CD8-positive, alpha-beta T cell (primary cell): ENCODE measurements at regions of chr1 and their contacts with region 1.

Region 1: DNA sequence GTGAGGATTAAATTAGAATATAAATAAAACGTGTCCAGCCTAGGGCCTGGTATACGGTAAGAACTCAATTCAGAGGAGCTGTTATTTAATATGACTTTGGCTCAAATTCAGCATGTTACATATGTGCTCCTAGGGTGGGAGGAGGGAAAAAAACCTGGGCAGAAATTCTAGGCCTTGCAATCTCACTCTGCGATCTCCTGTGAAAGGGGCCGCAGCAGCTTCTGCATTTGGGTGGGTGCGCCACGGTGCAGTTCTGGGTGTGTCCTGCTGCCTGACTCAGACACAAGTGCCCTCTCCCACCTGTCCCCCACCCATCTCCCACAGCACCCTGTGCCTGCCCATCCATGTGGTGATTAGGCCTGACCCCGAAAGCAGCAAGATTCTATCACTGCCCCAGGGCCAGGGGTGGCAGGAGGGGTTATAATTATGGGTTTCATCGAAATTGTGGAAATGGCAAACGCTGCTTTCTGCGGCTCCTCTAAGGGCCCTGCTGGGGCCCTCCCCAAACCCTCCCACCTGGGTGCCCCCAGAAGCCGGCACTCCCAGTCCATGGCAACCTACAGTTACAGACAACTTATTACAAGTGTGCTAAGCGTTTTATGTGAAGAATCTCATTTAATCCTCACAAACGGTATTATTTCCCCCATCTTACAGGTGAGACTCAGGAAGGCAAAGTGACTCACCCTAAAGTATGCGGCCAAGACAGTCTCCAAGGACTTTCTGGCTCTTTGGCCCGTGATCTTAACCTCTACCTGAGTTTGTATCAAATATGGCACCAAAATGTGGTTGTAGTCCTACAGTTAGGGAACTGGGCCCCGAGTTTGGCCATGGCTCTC is 25.5 kb upstream of the GRHL3 start:
- DNase-seq: peak in 1 of 9 experiments; percentile 42
- ATAC-seq: no peak
- H3K4me3 ChIP-seq: no peak overlapping the region
- H3K4me3 Mint-ChIP-seq: no peak overlapping the region
- H3K27ac ChIP-seq: no peak overlapping the region
- H3K27ac Mint-ChIP-seq: no peak overlapping the region
- H3K4me1 ChIP-seq: no peaks in the 10 kb centered on the region
- H3K4me1 Mint-ChIP-seq: no peaks in the 10 kb centered on the region
- H3K27me3 ChIP-seq: no peaks in the 10 kb centered on the region
- H3K27me3 Mint-ChIP-seq: peaks cover 10% of the 10 kb centered on the region
- CTCF ChIP-seq: no peak

Region 2: GRCh38 chr1:24329797-24330543 is 36.4 kb after region 1 on chr1:
- CTCF ChIA-PET with region 1: no interaction called
- POLR2A ChIA-PET with region 1: no interaction called
- intact Hi-C with region 1: loop called in 1 of 2 experiments (anchors 1 kb)
- DNase-seq: no peak
- ATAC-seq: no peak
- H3K4me3 ChIP-seq: no peak overlapping the region
- H3K4me3 Mint-ChIP-seq: no peak overlapping the region
- H3K27ac ChIP-seq: no peak overlapping the region
- H3K27ac Mint-ChIP-seq: no peak overlapping the region
- H3K4me1 ChIP-seq: no peaks in the 10 kb centered on the region
- H3K4me1 Mint-ChIP-seq: no peaks in the 10 kb centered on the region
- H3K27me3 ChIP-seq: no peaks in the 10 kb centered on the region
- H3K27me3 Mint-ChIP-seq: no peaks in the 10 kb centered on the region
- CTCF ChIP-seq: no peak